ENCODE measurements at regions of chr6 and their contacts with region 1.

Region 1: GRCh38 chr6:168157272-168158007 is 78.4 kb upstream of the FRMD1 start:
- DNase-seq: no peak
- ATAC-seq: no peak
- H3K4me3 ChIP-seq: no peak overlapping the region
- H3K27ac ChIP-seq: no peak overlapping the region
- H3K4me1 ChIP-seq: peaks cover 8% of the 10 kb centered on the region
- H3K27me3 ChIP-seq: no peaks in the 10 kb centered on the region
- CTCF ChIP-seq: no peak
- POLR2A ChIP-seq: no peak

Region 2: DNA sequence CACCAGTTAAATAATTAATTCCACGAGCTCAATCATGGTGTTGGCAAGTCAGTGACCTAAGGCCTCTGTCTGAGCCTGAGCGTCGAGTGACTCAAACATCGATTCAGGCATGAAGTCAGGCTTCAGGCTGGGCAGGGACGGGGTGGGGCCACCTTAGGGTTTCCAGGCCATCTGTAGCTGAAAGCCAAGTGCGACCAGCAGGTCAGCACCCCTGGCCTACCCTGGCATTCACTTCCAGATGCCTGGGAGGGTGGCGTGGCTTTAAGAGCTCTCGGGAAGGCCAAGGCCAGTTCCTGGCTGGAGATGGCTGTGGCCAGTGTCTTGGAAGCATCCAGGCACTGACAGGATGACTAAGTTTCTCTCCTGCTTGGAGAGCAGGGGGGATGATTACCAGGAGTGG is 48.7 kb after region 1 on chr6:
- intact Hi-C with region 1: no loop called
- DNase-seq: no peak
- ATAC-seq: no peak
- H3K4me3 ChIP-seq: no peak overlapping the region
- H3K27ac ChIP-seq: no peak overlapping the region
- H3K4me1 ChIP-seq: no peaks in the 10 kb centered on the region
- H3K27me3 ChIP-seq: no peaks in the 10 kb centered on the region
- CTCF ChIP-seq: no peak
- POLR2A ChIP-seq: no peak

Region 3: GRCh38 chr6:168247443-168248147 is 90.2 kb after region 1 on chr6:
- intact Hi-C with region 1: no loop called
- DNase-seq: peak; percentile 68 to 82 (median 79)
- ATAC-seq: peak; percentile 87
- H3K4me3 ChIP-seq: no peak overlapping the region
- H3K27ac ChIP-seq: peak overlapping the region in 2 of 4 donors; percentile 7 to 52
- H3K4me1 ChIP-seq: peaks cover 13% of the 10 kb centered on the region
- H3K27me3 ChIP-seq: no peaks in the 10 kb centered on the region
- CTCF ChIP-seq: no peak
- POLR2A ChIP-seq: no peak

Region 4: DNA sequence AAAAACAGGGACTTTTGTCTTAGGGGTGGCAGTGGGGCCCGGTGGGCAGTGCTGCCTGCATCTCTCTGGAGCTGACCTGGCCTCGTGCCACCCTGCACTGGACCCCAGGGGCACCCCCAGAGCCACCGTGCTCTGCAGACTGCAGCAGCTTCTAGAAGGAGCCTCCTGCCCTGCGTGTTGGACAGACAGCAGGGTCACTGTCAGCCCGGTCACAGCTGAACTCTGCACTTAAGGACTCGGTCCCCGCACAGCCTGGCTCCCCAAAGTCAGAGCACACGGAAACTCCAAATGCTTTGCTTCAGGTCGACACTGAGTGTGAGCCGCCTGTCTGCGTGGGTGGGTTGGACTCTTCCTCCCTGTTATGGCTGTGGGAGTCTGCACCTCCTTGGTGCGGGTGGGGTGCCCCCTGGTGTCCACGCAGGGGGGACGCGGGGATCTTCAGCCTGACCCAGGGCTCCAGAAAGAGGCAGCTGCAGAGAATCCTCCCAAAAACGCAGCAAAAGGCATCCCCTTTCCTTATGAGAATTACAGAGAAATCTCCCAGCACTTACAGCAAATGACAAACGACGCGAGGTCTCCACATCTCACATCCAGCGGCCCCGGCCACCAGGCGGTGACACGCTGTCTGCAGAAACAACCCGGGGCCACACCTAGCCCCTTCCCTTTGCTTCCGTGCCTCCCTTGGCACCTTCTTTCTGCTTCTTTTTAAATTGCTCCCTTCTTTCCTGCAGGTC is 198.4 kb after region 1 on chr6:
- intact Hi-C with region 1: loop called (anchors 10 kb)
- DNase-seq: peak; percentile 66 to 74 (median 68)
- ATAC-seq: peak; percentile 89
- H3K4me3 ChIP-seq: no peak overlapping the region
- H3K27ac ChIP-seq: no peak overlapping the region
- H3K4me1 ChIP-seq: no peaks in the 10 kb centered on the region
- H3K27me3 ChIP-seq: no peaks in the 10 kb centered on the region
- CTCF ChIP-seq: peak; percentile 73 to 89 (median 79)
- POLR2A ChIP-seq: no peak

Measured in body of pancreas (tissue), 4 donors.